Activated CD4-positive, alpha-beta memory T cell treated with anti-CD3 and anti-CD28 coated beads, Interleukin-2, amount 10 ng/mL, durations not matched to agents 7 days and 5 days (primary cell): ENCODE measurements at regions of chr22 and their contacts with region 1.

Region 1: GRCh38 chr22:40177738-40178416 is at the start of gene TNRC6B:
- DNase-seq: peak; percentile 82
- H3K4me3 Mint-ChIP-seq: peak within 1 kb of the TSS; percentile 92
- H3K27ac Mint-ChIP-seq: peak within 1 kb of the TSS; percentile 92
- H3K4me1 Mint-ChIP-seq: peaks cover 49% of the 10 kb centered on the region
- H3K27me3 Mint-ChIP-seq: no peaks in the 10 kb centered on the region
- total RNA-seq, gene TNRC6B: 51.0 to 55.0 TPM

Region 2: GRCh38 chr22:40107851-40108378 is 70.0 kb before region 1 on chr22:
- CTCF ChIA-PET with region 1: interaction called, 7 read pairs
- POLR2A ChIA-PET with region 1: interaction called, 43 read pairs
- DNase-seq: peak; percentile 41
- H3K4me3 Mint-ChIP-seq: peak overlapping the region; percentile 70
- H3K27ac Mint-ChIP-seq: peak overlapping the region; percentile 72
- H3K4me1 Mint-ChIP-seq: peaks cover 51% of the 10 kb centered on the region
- H3K27me3 Mint-ChIP-seq: no peaks in the 10 kb centered on the region

Region 3: GRCh38 chr22:40203572-40203971 is 25.7 kb after region 1 on chr22:
- CTCF ChIA-PET with region 1: no interaction called
- POLR2A ChIA-PET with region 1: interaction called, 11 read pairs
- DNase-seq: peak; percentile 42
- H3K4me3 Mint-ChIP-seq: no peak overlapping the region
- H3K27ac Mint-ChIP-seq: peak overlapping the region; percentile 47
- H3K4me1 Mint-ChIP-seq: peaks cover 45% of the 10 kb centered on the region
- H3K27me3 Mint-ChIP-seq: no peaks in the 10 kb centered on the region

Region 4: GRCh38 chr22:40289991-40290459 is 112.1 kb after region 1 on chr22:
- CTCF ChIA-PET with region 1: no interaction called
- POLR2A ChIA-PET with region 1: interaction called, 17 read pairs
- DNase-seq: peak; percentile 75
- H3K4me3 Mint-ChIP-seq: peak overlapping the region; percentile 40
- H3K27ac Mint-ChIP-seq: peak overlapping the region; percentile 89
- H3K4me1 Mint-ChIP-seq: peaks cover 61% of the 10 kb centered on the region
- H3K27me3 Mint-ChIP-seq: no peaks in the 10 kb centered on the region